Activated CD4-positive, alpha-beta memory T cell treated with anti-CD3 and anti-CD28 coated beads, Interleukin-2, amount 10 ng/mL, durations not matched to agents 7 days and 5 days (primary cell): ENCODE measurements at regions of chrX and their contacts with region 1.

Region 1: GRCh38 chrX:41333744-41334259 is at the start of gene DDX3X:
- DNase-seq: peak; percentile 86
- H3K4me3 Mint-ChIP-seq: peak within 1 kb of the TSS; percentile 87
- H3K27ac Mint-ChIP-seq: peak within 1 kb of the TSS; percentile 100
- H3K4me1 Mint-ChIP-seq: peaks cover 37% of the 10 kb centered on the region
- H3K27me3 Mint-ChIP-seq: no peaks in the 10 kb centered on the region
- total RNA-seq, gene DDX3X: 224 to 225 TPM

Region 2: GRCh38 chrX:41245641-41246040 is 88.2 kb before region 1 on chrX:
- CTCF ChIA-PET with region 1: no interaction called
- POLR2A ChIA-PET with region 1: no interaction called
- DNase-seq: no peak
- H3K4me3 Mint-ChIP-seq: no peak overlapping the region
- H3K27ac Mint-ChIP-seq: no peak overlapping the region
- H3K4me1 Mint-ChIP-seq: no peaks in the 10 kb centered on the region
- H3K27me3 Mint-ChIP-seq: peaks cover 1% of the 10 kb centered on the region

Region 3: DNA sequence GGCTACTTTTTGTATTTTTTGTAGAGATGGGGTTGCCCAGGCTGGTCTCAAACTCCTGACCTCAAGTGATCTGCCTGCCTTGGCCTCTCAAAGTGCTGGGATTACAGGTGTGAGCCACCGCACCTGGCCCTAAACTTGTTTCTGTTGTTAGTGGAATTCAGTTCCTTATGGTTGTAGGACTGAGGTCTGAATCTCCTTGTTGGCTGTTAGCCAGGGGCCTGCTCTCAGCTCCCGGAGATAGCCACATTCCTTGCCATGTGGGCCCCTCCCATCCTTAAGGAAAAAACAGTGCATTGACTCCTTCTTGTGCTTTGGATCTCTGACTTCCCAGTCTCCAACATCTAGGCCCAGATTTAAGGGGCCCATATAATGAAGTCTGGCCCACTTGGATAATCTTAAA is 64.0 kb after region 1 on chrX:
- CTCF ChIA-PET with region 1: no interaction called
- POLR2A ChIA-PET with region 1: no interaction called
- DNase-seq: no peak
- H3K4me3 Mint-ChIP-seq: no peak overlapping the region
- H3K27ac Mint-ChIP-seq: no peak overlapping the region
- H3K4me1 Mint-ChIP-seq: no peaks in the 10 kb centered on the region
- H3K27me3 Mint-ChIP-seq: no peaks in the 10 kb centered on the region

Region 4: DNA sequence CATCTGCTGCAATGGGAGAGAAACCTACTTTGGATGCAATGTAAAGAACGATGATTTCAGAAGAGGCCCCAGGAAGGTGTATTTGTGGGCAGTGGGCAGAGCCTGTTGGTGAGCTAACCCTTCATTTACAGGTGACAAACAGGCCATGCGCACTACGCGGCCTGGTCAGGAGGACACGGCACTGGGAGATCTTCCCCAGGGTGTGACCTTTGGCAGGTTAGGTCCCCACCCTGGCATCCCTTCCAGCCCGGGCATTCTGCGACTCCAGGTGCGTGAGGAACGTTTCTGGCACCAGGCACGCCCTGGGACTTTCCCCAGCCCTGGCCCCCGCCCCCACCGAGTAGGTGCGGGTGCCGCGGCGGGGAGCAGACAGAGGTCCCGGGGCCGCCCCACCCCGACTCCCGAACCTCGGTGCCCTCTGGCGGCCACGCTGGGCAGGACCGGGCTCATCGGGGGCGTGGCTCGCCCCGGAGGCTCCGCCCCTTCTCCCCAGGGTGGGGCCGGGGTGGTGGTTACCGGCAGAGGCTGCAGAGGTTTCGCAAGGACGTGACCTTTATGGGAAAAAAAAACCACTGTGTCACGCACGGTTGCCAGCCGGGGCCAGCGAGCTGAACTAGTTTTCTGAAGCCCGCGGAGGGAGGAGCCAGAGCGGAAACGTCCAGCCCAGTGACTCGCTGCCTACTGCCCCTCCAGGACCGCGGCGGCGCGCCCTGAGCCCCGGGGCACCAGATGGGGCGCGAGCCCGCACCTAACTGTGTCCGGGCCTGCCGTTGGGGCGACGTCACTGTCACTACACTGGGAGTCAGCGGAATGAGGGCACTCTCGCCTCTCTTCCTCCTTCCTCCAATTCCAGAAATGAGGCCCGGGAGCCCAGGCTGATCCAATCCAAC is 108.4 kb after region 1 on chrX:
- CTCF ChIA-PET with region 1: interaction called, 4 read pairs
- POLR2A ChIA-PET with region 1: interaction called, 11 read pairs
- DNase-seq: peak; percentile 92
- H3K4me3 Mint-ChIP-seq: peak overlapping the region; percentile 46
- H3K27ac Mint-ChIP-seq: peak overlapping the region; percentile 82
- H3K4me1 Mint-ChIP-seq: peaks cover 21% of the 10 kb centered on the region
- H3K27me3 Mint-ChIP-seq: no peaks in the 10 kb centered on the region